HepG2 (cell line): ENCODE measurements at regions of chr17 and their contacts with region 1.

Region 1: GRCh38 chr17:28684963-28685362 is 23.0 kb downstream of the SUPT6H start:
- DNase-seq: peak; percentile 65
- ATAC-seq: peak; percentile 68
- H3K4me3 ChIP-seq: no peak overlapping the region
- H3K27ac ChIP-seq: no peak overlapping the region
- H3K4me1 ChIP-seq: 0 out of 2 replicates have a peak, but pooled peaks cover 7% of the 10 kb centered on the region
- H3K27me3 ChIP-seq: no peaks in the 10 kb centered on the region
- CTCF ChIP-seq: peak; percentile 79
- EP300 ChIP-seq: no peak
- POLR2A ChIP-seq: no peak
- RAD21 ChIP-seq: 0 out of 2 replicates have a peak, but pooled peaks have one; percentile 38

Region 2: GRCh38 chr17:28655160-28655840 is 29.7 kb before region 1 on chr17:
- CTCF ChIA-PET with region 1: no interaction called
- POLR2A ChIA-PET with region 1: no interaction called
- in situ Hi-C with region 1: no loop called
- intact Hi-C with region 1: no loop called
- DNase-seq: no peak
- ATAC-seq: no peak
- H3K4me3 ChIP-seq: no peak overlapping the region
- H3K27ac ChIP-seq: no peak overlapping the region
- H3K4me1 ChIP-seq: peaks cover 12% of the 10 kb centered on the region
- H3K27me3 ChIP-seq: no peaks in the 10 kb centered on the region
- CTCF ChIP-seq: no peak
- EP300 ChIP-seq: no peak
- POLR2A ChIP-seq: no peak
- RAD21 ChIP-seq: no peak

Region 3: GRCh38 chr17:28750178-28751047 is 65.5 kb after region 1 on chr17:
- CTCF ChIA-PET with region 1: interaction called, 4 read pairs
- POLR2A ChIA-PET with region 1: no interaction called
- in situ Hi-C with region 1: no loop called
- intact Hi-C with region 1: loop called (anchors 2 kb)
- DNase-seq: peak; percentile 88
- ATAC-seq: peak; percentile 66
- H3K4me3 ChIP-seq: no peak overlapping the region
- H3K27ac ChIP-seq: peak overlapping the region; percentile 37
- H3K4me1 ChIP-seq: peaks cover 50% of the 10 kb centered on the region
- H3K27me3 ChIP-seq: no peaks in the 10 kb centered on the region
- CTCF ChIP-seq: peak; percentile 98
- EP300 ChIP-seq: no peak
- POLR2A ChIP-seq: peak in 1 of 2 experiments; percentile 43; a peak in 2 of 4 replicates
- RAD21 ChIP-seq: peak; percentile 95